Panc1 (cell line): ENCODE measurements at regions of chr17 and their contacts with region 1.

Region 1: DNA sequence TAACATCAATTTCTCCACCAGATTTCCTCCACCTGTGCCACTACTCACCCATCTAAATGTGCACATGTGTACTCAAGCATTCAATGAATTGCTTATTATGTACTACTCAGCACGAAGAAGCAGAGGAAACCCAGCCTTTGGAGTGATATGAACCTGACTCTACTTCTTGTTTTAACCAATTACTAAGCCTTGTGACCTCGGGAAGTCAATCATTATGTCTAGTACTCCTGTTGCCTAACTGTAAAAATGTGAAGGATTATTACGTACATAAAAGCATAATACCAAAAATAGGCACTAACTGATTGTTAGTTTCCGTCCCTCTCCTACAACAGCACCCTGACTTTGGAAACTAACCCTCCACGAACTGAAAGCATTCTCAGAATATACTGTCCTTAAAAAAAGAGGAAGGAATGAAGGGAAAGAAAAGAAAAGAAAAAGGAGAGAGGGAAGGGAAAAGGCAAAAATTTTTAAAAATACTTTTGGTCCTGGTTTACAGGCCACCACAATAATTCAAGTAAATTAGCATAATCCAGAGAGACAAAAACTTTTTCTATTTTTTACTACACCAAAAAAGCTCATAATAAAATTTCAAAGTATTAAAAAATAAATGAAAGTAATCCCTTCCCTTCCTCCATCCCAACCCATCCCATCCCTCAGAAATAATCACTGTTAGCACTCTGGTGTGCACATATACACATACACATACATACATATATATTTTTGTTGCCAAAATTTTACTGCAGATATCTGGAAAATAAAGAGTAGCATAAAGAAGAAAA is 53.6 kb downstream of the KANSL1 start:
- DNase-seq: no peak
- ATAC-seq: no peak
- H3K4me3 ChIP-seq: no peak overlapping the region
- H3K27ac ChIP-seq: no peak overlapping the region
- H3K4me1 ChIP-seq: peaks cover 3% of the 10 kb centered on the region; the same call in 1 of the 2 replicates
- H3K27me3 ChIP-seq: no peaks in the 10 kb centered on the region
- CTCF ChIP-seq: no peak

Region 2: GRCh38 chr17:44170499-44171201 is 1969.0 kb before region 1 on chr17 and contains the start of gene ASB16:
- CTCF ChIA-PET with region 1: interaction called, 11 read pairs
- POLR2A ChIA-PET with region 1: no interaction called
- in situ Hi-C with region 1: no loop called
- intact Hi-C with region 1: no loop called
- DNase-seq: no peak
- ATAC-seq: 0 out of 2 replicates have a peak, but pooled peaks have one; percentile 10
- H3K4me3 ChIP-seq: no peak within 1 kb of the TSS
- H3K27ac ChIP-seq: no peak within 1 kb of the TSS
- H3K4me1 ChIP-seq: peaks cover 8% of the 10 kb centered on the region
- H3K27me3 ChIP-seq: no peaks in the 10 kb centered on the region
- CTCF ChIP-seq: no peak; the same call in 1 of the 2 replicates
- total RNA-seq, gene ASB16: not detected

Region 3: DNA sequence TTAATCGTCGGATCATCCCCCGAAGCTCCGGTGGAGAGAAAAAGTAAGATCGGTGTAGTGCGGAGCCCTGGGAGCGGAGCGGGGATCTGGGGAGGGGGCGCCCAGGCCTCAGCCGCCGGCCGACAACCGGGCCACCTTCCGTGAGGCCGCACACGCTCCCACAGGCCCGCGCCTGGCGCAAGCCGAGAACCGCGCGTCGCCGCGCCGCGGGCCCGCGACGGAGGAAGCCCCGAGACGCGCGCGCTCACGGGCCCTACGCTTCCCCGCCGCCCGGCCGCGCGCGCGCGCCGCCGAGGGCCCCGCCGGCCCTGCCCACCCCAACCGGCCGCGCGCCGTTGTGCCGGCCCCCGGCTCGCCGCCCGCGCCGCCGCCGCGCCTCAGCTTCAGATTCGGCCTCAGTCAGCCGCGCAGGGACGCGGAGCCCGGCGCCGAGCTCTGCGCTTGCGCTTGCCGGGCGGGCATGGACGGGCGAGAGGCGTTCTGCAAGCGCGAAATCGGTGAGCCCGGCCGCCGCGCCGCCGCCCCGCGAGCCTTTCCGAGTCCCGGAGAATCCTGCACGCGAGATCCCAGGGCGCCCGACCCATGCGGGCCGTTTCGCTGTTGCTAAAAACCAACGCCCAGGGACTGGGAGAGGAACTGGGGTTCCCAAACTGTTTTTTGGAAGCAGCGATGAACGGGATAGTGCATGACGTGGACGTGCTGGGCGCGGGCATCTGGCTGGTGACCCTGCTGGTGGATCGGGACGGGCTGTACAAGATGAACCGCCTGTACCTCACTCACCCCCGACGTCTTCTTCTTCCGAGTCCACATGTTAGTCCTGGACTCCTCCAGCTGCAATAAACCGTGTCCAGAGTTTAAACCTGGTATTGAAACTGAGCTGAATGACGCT is 127.3 kb after region 1 on chr17:
- CTCF ChIA-PET with region 1: no interaction called
- POLR2A ChIA-PET with region 1: no interaction called
- in situ Hi-C with region 1: no loop called
- intact Hi-C with region 1: no loop called
- DNase-seq: no peak
- ATAC-seq: peak; percentile 93
- H3K4me3 ChIP-seq: peak overlapping the region; percentile 58 to 85
- H3K27ac ChIP-seq: peak overlapping the region; percentile 74
- H3K4me1 ChIP-seq: peaks cover 16% of the 10 kb centered on the region
- H3K27me3 ChIP-seq: no peaks in the 10 kb centered on the region
- CTCF ChIP-seq: no peak